B cell (primary cell): ENCODE measurements at regions of chr4 and their contacts with region 1.

Region 1: DNA sequence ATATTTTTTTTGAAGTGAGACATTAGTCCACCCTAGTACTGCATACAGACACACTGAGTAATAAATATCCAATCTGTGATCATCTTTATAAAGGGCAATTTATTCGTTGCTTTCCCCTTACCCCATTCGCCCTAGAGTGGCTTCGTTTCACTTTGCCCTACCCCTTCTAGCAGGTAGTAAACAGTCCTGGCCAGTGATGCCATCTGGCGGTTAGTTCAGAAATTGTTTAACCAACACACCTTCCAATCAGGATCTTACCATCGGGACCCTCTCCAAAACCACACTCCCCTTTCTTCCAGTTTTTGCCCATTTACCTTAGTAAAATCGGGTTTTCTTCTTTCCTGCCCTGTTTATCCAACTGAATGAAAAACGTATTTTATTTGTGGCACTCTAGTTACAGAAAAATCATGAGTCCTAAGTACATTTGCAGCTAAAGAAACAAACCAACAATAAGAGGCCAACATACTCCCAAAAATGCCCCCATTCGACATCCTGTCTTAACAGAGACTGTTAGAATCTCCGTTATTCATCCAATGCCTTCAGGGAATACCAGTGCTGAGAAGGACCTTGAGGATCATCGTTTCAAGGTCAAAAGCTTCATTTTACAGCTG is 2.2 kb downstream of the PPA2 start:
- DNase-seq: peak; percentile 83
- ATAC-seq: peak; percentile 32
- H3K4me3 ChIP-seq: no peak overlapping the region
- H3K4me3 Mint-ChIP-seq: peak overlapping the region; percentile 75
- H3K27ac ChIP-seq: no peak overlapping the region
- H3K27ac Mint-ChIP-seq: peak overlapping the region; percentile 42
- H3K4me1 ChIP-seq: peaks cover 17 to 23% of the 10 kb centered on the region in 2 donors
- H3K4me1 Mint-ChIP-seq: peaks cover 43% of the 10 kb centered on the region
- H3K27me3 ChIP-seq: peaks cover 0 to 4% (median 0%) of the 10 kb centered on the region in 4 experiments
- H3K27me3 Mint-ChIP-seq: no peaks in the 10 kb centered on the region
- CTCF ChIP-seq: peak; percentile 79

Region 2: GRCh38 chr4:104930298-104930697 is 541.4 kb before region 1 on chr4:
- CTCF ChIA-PET with region 1: interaction called, 12 read pairs
- POLR2A ChIA-PET with region 1: no interaction called
- intact Hi-C with region 1: loop called (anchors 1 kb)
- DNase-seq: peak; percentile 5
- ATAC-seq: no peak
- H3K4me3 ChIP-seq: peak overlapping the region in 1 of 5 experiments; percentile 6
- H3K4me3 Mint-ChIP-seq: peak overlapping the region; percentile 37
- H3K27ac ChIP-seq: no peak overlapping the region
- H3K27ac Mint-ChIP-seq: peak overlapping the region; percentile 69
- H3K4me1 ChIP-seq: peaks cover 13 to 20% of the 10 kb centered on the region in 2 donors
- H3K4me1 Mint-ChIP-seq: peaks cover 23% of the 10 kb centered on the region
- H3K27me3 ChIP-seq: no peaks in the 10 kb centered on the region
- H3K27me3 Mint-ChIP-seq: no peaks in the 10 kb centered on the region
- CTCF ChIP-seq: no peak

Region 3: GRCh38 chr4:105146276-105147015 is 325.2 kb before region 1 on chr4 and contains the start of gene TET2:
- CTCF ChIA-PET with region 1: interaction called, 79 read pairs
- POLR2A ChIA-PET with region 1: interaction called, 18 read pairs
- intact Hi-C with region 1: loop called (anchors 1 kb)
- DNase-seq: peak; percentile 90
- ATAC-seq: peak; percentile 86
- H3K4me3 ChIP-seq: peak within 1 kb of the TSS; percentile 81 to 95 (median 92)
- H3K4me3 Mint-ChIP-seq: peak within 1 kb of the TSS; percentile 97
- H3K27ac ChIP-seq: peak within 1 kb of the TSS; percentile 87 to 89
- H3K27ac Mint-ChIP-seq: peak within 1 kb of the TSS; percentile 98
- H3K4me1 ChIP-seq: peaks cover 14 to 17% of the 10 kb centered on the region in 2 donors
- H3K4me1 Mint-ChIP-seq: peaks cover 39% of the 10 kb centered on the region
- H3K27me3 ChIP-seq: no peaks in the 10 kb centered on the region
- H3K27me3 Mint-ChIP-seq: no peaks in the 10 kb centered on the region
- CTCF ChIP-seq: no peak
- total RNA-seq, gene TET2: 51.1 and 56.8 TPM in 2 replicates

Region 4: DNA sequence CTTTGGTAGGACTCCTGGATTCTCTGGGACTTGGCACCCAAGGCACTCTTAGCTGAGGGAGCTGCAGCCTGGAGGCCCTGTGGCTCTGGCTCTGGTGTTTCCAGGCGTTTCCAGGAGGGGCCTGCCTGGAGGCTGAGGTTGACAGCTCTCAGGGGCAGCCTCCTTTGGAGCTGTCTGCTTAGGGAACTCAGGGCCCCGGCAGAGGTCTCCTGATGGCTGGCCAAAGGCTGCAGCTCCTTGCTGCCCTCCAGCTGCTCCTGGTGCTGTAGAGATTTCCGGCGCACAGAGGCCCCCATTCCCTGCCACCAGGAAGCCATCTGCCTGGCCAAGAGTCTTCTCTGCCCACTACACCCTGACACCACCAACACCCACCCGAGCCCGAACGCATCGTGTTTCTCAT is 55.4 kb after region 1 on chr4:
- CTCF ChIA-PET with region 1: no interaction called
- POLR2A ChIA-PET with region 1: no interaction called
- intact Hi-C with region 1: no loop called
- DNase-seq: no peak
- ATAC-seq: no peak
- H3K4me3 ChIP-seq: no peak overlapping the region
- H3K4me3 Mint-ChIP-seq: no peak overlapping the region
- H3K27ac ChIP-seq: no peak overlapping the region
- H3K27ac Mint-ChIP-seq: no peak overlapping the region
- H3K4me1 ChIP-seq: no peaks in the 10 kb centered on the region
- H3K4me1 Mint-ChIP-seq: no peaks in the 10 kb centered on the region
- H3K27me3 ChIP-seq: peaks cover 0 to 5% (median 2%) of the 10 kb centered on the region in 4 experiments
- H3K27me3 Mint-ChIP-seq: peaks cover 25% of the 10 kb centered on the region
- CTCF ChIP-seq: no peak

Region 5: DNA sequence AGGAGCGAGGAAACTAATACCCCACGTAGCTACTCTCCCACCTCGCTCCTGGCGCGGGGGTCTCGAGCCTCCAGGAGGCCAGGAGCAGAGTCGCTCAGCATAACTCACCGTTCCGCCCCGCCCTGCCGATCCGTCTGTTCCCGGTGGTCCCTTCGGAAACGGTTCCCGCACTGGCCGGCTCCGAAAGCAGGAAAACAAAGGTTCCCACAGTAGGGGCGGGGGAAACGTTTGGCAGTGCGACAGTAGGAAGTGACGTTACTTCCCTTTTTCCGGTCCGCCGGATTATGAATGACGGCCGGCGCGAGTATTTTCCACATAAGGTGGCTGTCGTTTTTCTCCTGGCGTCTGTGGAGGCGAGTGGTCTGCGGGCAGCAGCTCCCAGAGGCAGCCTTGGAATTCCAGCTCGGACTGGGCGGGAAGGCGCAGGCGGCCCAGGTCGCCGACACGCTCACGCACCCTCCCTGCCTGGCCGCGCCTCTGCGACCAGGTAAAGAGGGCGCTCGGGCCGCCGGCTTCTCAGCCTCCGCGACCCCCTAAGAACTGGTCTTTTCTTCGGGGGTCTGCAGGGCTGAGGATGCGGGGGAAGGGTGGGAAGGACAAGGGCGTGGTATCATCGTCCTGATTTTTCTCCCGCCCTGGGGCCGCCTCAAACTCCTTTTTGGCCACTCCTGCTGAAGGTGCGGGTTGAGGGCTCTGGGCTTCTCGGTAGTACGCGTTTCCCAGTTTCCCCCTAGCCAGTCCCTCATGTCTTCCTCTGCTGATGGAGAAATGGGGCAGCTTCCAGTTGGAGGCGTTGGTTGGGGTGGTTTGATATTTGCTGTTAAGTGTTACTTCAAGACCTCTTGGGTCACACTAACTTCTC is 237.1 kb after region 1 on chr4 and contains the starts of genes GSTCD and INTS12:
- CTCF ChIA-PET with region 1: interaction called, 5 read pairs
- POLR2A ChIA-PET with region 1: no interaction called
- intact Hi-C with region 1: loop called (anchors 1 kb)
- DNase-seq: peak; percentile 94
- ATAC-seq: peak; percentile 94
- H3K4me3 ChIP-seq: peak within 1 kb of the TSS; percentile 80 to 99 (median 90)
- H3K4me3 Mint-ChIP-seq: peak within 1 kb of the TSS; percentile 100
- H3K27ac ChIP-seq: peak within 1 kb of the TSS; percentile 81 to 92
- H3K27ac Mint-ChIP-seq: peak within 1 kb of the TSS; percentile 98
- H3K4me1 ChIP-seq: peaks cover 14 to 19% of the 10 kb centered on the region in 2 donors
- H3K4me1 Mint-ChIP-seq: peaks cover 38% of the 10 kb centered on the region
- H3K27me3 ChIP-seq: no peaks in the 10 kb centered on the region
- H3K27me3 Mint-ChIP-seq: no peaks in the 10 kb centered on the region
- CTCF ChIP-seq: no peak
- total RNA-seq, gene GSTCD: 12.8 and 13.2 TPM in 2 replicates
- total RNA-seq, gene INTS12: 18.4 and 19.1 TPM in 2 replicates